ENCODE measurements at regions of chr10 and their contacts with region 1.

Region 1: DNA sequence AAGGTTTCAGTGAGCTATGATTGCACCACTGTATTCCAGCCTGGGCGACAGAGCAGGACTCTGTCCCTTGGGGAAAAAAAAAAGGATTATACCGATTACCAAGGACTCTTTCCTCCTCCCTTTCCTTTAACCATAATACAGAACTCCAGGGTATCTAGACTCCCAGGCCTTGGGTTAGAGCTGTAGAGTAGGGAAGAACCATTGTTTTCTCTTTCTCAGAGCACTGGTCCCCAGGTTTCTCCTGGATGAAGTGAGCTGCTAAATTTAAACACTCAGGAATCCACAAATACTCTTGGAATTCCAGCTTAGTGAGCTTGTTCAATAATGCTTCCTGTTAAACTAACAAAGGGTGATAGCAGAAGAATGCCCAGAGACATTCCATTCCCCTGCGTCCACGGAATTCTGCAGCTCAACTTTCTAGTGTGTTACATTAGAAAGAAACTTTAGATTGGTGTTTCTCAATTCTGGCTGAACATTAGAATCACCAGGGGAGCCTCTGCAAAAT is 14.6 kb upstream of the RPEL1 start:
- DNase-seq: peak; percentile 97
- ATAC-seq: peak; percentile 86
- H3K4me3 ChIP-seq: 0 out of 4 replicates have a peak overlapping the region, but pooled peaks of 1 of the 2 experiments have one; percentile 13
- H3K27ac ChIP-seq: peak overlapping the region; percentile 86
- H3K4me1 ChIP-seq: peaks cover 56% of the 10 kb centered on the region
- H3K27me3 ChIP-seq: no peaks in the 10 kb centered on the region
- CTCF ChIP-seq: no peak

Region 2: DNA sequence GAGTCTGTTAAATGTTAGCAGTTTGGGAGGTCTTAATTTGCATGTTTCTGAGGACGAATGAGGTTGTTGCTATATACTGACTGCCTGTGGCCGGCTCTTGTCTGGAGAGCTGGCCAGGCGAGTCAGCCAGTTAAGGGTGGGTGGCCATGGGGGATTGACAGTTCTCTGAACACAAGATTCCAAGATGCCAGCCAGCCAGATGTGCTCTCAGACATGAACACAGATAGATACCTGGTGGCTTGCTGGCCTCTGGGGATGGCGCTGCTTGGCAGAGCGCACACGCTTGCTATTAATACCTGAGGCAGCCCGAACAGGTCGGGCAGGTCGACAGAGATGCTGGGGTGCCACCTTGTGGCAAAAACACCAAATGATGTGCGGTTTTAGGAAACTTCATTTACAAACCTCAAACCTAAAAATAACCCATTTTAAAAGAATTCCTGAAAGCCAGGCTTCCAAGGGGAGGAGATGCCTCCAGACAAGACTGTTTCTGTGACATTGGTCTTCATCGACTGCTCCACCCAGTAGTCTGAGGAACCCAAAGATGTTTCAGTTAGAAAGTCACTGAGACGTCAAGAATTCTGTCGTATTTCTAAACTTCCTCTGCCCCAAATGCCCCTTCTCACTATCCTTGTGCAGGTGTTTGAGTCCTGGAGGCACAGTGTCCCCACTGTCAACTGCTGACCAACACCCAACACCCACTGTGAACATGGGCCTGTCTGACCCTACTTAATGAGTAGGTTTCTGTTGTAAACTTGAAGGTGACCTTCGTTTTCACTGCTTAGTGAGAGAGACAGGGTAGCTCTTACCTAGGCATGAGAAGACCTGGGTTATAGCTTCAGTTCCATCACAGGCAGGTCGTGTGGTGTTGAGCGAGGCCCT is 161.4 kb before region 1 on chr10:
- CTCF ChIA-PET with region 1: no interaction called
- POLR2A ChIA-PET with region 1: interaction called, 13 read pairs
- in situ Hi-C with region 1: no loop called
- intact Hi-C with region 1: no loop called
- DNase-seq: no peak
- ATAC-seq: peak; percentile 84
- H3K4me3 ChIP-seq: no peak overlapping the region
- H3K27ac ChIP-seq: no peak overlapping the region
- H3K4me1 ChIP-seq: no peaks in the 10 kb centered on the region
- H3K27me3 ChIP-seq: no peaks in the 10 kb centered on the region
- CTCF ChIP-seq: peak; percentile 90

Measured in Panc1 (cell line).